ENCODE measurements at regions of chr14 and their contacts with region 1.

Region 1: DNA sequence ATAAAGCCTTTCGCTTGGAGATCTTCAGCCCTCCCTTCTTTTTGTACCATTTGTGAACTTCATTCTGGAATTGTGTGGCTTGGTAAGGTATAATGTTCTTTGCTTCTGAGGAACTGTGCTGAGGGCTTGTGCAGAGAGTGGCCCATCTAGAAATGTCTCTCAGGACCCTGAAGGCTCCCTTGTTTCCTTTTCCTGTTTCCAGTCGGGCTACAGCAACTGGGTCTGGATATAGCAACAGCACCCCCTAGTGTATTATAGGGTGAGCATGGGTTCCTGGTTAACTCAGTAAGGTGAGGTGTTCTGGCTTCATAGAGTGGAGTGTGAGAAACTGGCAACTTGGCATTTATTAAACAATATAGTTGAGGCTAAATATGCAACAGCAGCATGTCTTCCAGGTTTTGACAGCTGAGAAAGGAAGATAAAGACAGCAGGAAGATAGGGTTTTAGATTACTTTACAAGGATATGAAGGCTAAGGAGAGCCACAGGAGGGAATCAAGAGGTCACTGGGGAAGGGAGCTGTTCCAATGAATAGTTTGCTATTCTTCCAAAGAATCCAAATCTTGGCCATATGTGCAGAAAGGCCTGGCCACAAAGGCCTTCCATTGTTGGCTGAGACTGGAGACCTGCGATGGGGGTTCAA is 49.1 kb upstream of the RNU6-8 start:
- DNase-seq: peak; percentile 75
- ATAC-seq: peak; percentile 90
- H3K4me3 ChIP-seq: no peak overlapping the region
- H3K27ac ChIP-seq: no peak overlapping the region
- H3K4me1 ChIP-seq: peaks cover 2% of the 10 kb centered on the region; the same call in 1 of the 2 replicates
- H3K27me3 ChIP-seq: 0 out of 2 replicates have a peak, but pooled peaks cover 3% of the 10 kb centered on the region
- CTCF ChIP-seq: peak; percentile 94
- POLR2A ChIP-seq: peak; percentile 44; the same call in 1 of the 2 replicates
- RAD21 ChIP-seq: peak; percentile 94

Region 2: DNA sequence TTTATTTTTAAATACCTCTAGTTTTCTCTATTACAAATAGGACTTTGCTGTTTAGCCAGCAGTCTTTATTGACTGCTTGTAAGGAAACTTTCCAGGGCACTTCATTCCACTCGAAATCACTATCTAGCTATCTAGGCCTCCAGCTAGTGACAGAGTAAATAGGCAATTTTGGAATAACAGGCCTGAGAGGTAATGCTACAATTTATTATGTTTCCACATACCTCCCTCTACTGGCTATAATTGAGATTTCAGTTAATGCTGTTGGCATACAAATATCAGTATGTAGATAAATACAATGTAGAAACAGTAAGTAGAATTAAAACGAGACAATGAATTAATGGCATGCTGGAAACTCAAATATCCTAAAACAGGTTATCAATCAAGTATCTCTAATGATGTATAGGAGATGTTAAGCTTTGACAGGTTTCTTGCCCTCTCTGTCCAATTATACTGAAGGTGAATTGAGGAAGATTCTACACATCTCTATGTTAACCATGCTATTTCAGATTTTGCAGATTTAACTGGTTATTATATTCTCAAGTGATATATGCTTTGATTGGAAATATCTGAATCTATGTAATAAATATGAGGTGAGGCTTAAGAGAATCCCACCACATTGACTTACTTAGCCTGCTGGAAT is 802.1 kb before region 1 on chr14:
- CTCF ChIA-PET with region 1: interaction called, 3 read pairs
- POLR2A ChIA-PET with region 1: no interaction called
- dilution Hi-C with region 1: no loop called
- in situ Hi-C with region 1: no loop called
- intact Hi-C with region 1: loop called (anchors 5 kb)
- DNase-seq: peak; percentile 41
- ATAC-seq: peak; percentile 81
- H3K4me3 ChIP-seq: no peak overlapping the region
- H3K27ac ChIP-seq: no peak overlapping the region
- H3K4me1 ChIP-seq: no peaks in the 10 kb centered on the region
- H3K27me3 ChIP-seq: no peaks in the 10 kb centered on the region
- CTCF ChIP-seq: peak; percentile 61
- POLR2A ChIP-seq: no peak
- RAD21 ChIP-seq: peak; percentile 61

Region 3: GRCh38 chr14:31926123-31926522 is 326.0 kb before region 1 on chr14:
- CTCF ChIA-PET with region 1: interaction called, 3 read pairs
- POLR2A ChIA-PET with region 1: no interaction called
- dilution Hi-C with region 1: no loop called
- in situ Hi-C with region 1: loop called (anchors 25 kb)
- intact Hi-C with region 1: loop called (anchors 2 kb)
- DNase-seq: peak; percentile 53
- ATAC-seq: no peak
- H3K4me3 ChIP-seq: no peak overlapping the region
- H3K27ac ChIP-seq: no peak overlapping the region
- H3K4me1 ChIP-seq: peaks cover 8% of the 10 kb centered on the region
- H3K27me3 ChIP-seq: no peaks in the 10 kb centered on the region
- CTCF ChIP-seq: peak; percentile 51
- POLR2A ChIP-seq: no peak
- RAD21 ChIP-seq: peak; percentile 44

Region 4: DNA sequence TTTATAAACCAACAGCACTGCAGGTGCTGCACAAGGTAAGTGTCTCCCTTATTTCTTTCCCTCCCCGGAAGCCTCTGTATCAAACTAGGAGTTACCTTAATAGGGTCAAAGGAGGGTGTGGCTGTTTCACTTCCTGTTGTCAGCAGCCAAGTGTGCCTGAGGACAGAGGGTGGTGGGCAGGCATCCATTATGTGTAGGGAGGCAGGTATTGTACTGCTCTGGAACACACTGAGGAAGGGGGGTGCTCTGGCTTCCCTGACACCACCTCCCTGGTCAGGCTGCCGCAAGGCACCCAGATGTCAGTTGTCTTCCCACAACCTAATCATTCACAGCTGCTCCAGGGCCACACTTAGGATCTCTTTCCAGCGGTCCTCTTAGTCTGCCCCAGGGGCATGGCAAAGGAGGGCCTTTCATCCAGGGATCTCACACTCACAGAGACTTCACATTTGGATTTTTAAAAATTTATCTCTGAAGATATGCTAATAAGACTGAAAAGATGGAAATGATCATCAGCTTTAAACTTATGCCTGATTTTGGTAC is 307.0 kb before region 1 on chr14:
- CTCF ChIA-PET with region 1: no interaction called
- POLR2A ChIA-PET with region 1: no interaction called
- dilution Hi-C with region 1: no loop called
- in situ Hi-C with region 1: loop called (anchors 25 kb)
- intact Hi-C with region 1: loop called (anchors 5 kb)
- DNase-seq: no peak
- ATAC-seq: no peak
- H3K4me3 ChIP-seq: no peak overlapping the region
- H3K27ac ChIP-seq: no peak overlapping the region
- H3K4me1 ChIP-seq: 0 out of 2 replicates have a peak, but pooled peaks cover 3% of the 10 kb centered on the region
- H3K27me3 ChIP-seq: peaks cover 7% of the 10 kb centered on the region
- CTCF ChIP-seq: no peak
- POLR2A ChIP-seq: no peak
- RAD21 ChIP-seq: no peak

Region 5: GRCh38 chr14:32076278-32077080 is 175.7 kb before region 1 on chr14:
- CTCF ChIA-PET with region 1: interaction called, 4 read pairs
- POLR2A ChIA-PET with region 1: no interaction called
- dilution Hi-C with region 1: no loop called
- in situ Hi-C with region 1: no loop called
- intact Hi-C with region 1: loop called (anchors 1 kb)
- DNase-seq: peak; percentile 95
- ATAC-seq: peak; percentile 90
- H3K4me3 ChIP-seq: peak overlapping the region; percentile 78
- H3K27ac ChIP-seq: peak overlapping the region; percentile 89
- H3K4me1 ChIP-seq: no peaks in the 10 kb centered on the region
- H3K27me3 ChIP-seq: no peaks in the 10 kb centered on the region
- CTCF ChIP-seq: no peak
- POLR2A ChIP-seq: peak; percentile 35; the same call in 1 of the 2 replicates
- RAD21 ChIP-seq: no peak

Region 6: DNA sequence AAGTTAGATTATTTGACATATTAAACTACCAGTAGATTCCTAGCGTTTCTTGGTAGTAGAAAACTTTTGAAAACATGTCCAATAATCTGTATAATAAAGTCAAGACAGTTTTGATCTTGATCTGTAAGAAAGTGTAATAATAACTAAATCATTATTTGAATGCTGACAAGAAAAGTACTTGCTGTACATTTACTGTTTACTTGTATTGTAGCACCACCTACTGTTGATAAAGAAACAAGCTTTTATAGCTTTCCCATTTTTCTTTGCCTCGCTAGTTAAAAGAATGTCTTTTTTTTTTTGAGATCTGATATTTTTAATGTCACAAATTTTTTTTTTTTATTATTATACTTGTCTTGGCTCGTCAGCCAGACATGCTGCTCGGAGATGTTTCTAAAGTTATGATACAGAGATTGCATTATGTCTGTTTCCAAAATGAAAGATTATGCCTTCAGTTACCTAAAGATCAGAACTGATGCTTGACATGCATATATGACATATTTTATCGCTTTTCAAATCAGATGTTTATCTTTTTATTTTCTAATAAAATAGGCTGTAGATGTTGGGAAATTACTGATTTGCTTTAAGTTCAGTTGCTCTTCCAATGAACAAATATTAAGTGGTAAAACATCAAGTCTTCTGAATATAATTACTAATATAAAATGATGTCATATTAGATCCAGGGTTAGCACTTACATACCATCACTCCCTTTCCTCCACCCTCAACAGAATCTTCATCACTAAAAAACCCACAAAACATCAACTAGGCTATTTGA is 217.4 kb after region 1 on chr14:
- CTCF ChIA-PET with region 1: interaction called, 6 read pairs
- POLR2A ChIA-PET with region 1: interaction called, 5 read pairs
- dilution Hi-C with region 1: no loop called
- in situ Hi-C with region 1: loop called (anchors 5 kb)
- intact Hi-C with region 1: loop called (anchors 1 kb)
- DNase-seq: peak; percentile 76
- ATAC-seq: peak; percentile 55
- H3K4me3 ChIP-seq: no peak overlapping the region
- H3K27ac ChIP-seq: peak overlapping the region; percentile 12; the same call in 1 of the 2 replicates
- H3K4me1 ChIP-seq: peaks cover 20% of the 10 kb centered on the region
- H3K27me3 ChIP-seq: no peaks in the 10 kb centered on the region
- CTCF ChIP-seq: peak; percentile 72
- POLR2A ChIP-seq: no peak
- RAD21 ChIP-seq: peak; percentile 78

Region 7: GRCh38 chr14:32560209-32560857 is 308.2 kb after region 1 on chr14:
- CTCF ChIA-PET with region 1: interaction called, 10 read pairs
- POLR2A ChIA-PET with region 1: no interaction called
- dilution Hi-C with region 1: no loop called
- in situ Hi-C with region 1: no loop called
- intact Hi-C with region 1: loop called (anchors 1 kb)
- DNase-seq: peak; percentile 82
- ATAC-seq: peak; percentile 91
- H3K4me3 ChIP-seq: no peak overlapping the region
- H3K27ac ChIP-seq: no peak overlapping the region
- H3K4me1 ChIP-seq: peaks cover 2% of the 10 kb centered on the region; the same call in 1 of the 2 replicates
- H3K27me3 ChIP-seq: no peaks in the 10 kb centered on the region
- CTCF ChIP-seq: peak; percentile 90
- POLR2A ChIP-seq: no peak
- RAD21 ChIP-seq: peak; percentile 92